CD4-positive, alpha-beta T cell (primary cell): ENCODE measurements at regions of chr14 and their contacts with region 1.

Region 1: DNA sequence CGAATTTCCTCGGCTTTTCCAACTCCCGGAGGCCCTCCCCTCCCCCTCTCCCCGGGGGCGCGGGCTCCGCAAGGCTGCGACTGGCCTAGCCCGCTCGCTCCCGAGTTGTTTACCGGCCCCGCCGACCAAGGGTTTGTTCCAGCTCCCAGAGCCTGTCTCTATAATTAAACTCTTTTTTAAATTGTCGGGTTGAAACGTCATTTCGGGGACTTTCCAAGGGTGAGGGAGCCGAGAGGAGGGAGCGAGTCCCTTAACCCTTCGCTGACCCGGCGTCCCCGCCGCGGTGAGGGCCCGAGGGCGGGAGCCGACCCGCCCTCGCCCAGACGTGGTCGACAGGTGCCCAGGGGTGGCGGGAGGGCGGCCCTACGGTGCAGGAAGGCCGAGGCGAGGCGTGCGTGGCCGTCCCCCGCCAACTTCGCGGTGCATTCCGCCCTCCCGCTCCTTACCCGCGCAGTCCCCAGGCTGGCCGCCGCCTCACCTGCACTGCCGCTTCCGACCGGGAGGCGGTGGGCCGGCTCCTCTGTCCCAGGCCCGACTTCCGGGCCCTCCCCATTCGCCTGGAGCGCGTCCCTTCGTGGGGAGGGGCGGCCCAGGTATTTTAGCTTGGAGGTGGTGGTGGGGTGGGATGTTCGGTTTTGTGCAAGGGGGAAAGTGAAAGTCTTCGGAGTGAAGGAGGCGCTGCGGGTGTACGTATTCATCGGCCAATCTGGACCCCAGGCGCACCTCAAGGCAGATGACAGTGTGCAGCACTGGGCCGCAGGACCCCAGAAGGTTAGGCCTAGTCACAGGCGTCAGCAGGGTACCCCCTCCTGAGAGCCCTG is 2.9 kb upstream of the ZFP36L1 start:
- DNase-seq: peak; percentile 66 to 95 (median 80)
- ATAC-seq: peak; percentile 43
- H3K4me3 ChIP-seq: peak overlapping the region; percentile 98
- H3K4me3 Mint-ChIP-seq: peak overlapping the region; percentile 92
- H3K27ac ChIP-seq: peak overlapping the region; percentile 100
- H3K27ac Mint-ChIP-seq: peak overlapping the region; percentile 99
- H3K4me1 ChIP-seq: peaks cover 29% of the 10 kb centered on the region
- H3K4me1 Mint-ChIP-seq: peaks cover 49% of the 10 kb centered on the region
- H3K27me3 ChIP-seq: no peaks in the 10 kb centered on the region
- H3K27me3 Mint-ChIP-seq: no peaks in the 10 kb centered on the region
- CTCF ChIP-seq: peak; percentile 77

Region 2: DNA sequence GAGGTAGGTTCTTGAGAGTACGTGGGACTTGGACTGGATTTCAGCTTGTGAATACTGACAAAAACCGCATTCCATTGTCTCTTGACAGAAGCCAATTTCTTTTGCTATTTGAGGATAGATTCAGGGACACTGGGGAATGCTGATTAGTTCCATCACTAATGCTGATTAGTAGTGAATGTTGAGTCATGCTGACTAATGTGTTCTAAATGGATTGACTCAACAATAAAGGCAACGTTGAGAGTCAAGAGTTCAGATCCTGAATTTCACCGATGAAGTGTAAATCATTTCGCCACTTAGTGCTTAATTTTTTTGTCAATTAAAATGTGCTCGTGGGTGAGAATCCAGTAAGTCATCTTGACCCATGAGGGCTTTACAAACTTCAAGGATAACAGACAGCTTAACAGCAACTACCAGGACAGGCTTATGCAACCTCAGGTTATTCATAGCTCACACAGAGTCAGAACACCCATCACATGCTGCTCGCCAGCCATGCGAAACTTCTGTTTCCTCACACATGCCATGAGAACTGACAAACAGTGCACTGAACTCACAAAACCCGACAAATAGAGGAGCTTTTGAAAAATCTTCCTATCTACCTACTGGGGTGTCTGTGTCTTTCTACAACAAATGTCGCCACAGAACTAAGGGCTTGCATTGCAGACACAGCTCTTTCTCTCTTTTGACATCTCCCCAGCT is 319.4 kb before region 1 on chr14:
- CTCF ChIA-PET with region 1: no interaction called
- POLR2A ChIA-PET with region 1: no interaction called
- intact Hi-C with region 1: no loop called
- DNase-seq: peak in 2 of 14 experiments; percentile 50 to 61
- ATAC-seq: no peak
- H3K4me3 ChIP-seq: no peak overlapping the region
- H3K4me3 Mint-ChIP-seq: no peak overlapping the region
- H3K27ac ChIP-seq: no peak overlapping the region
- H3K27ac Mint-ChIP-seq: no peak overlapping the region
- H3K4me1 ChIP-seq: peaks cover 6% of the 10 kb centered on the region
- H3K4me1 Mint-ChIP-seq: peaks cover 6% of the 10 kb centered on the region
- H3K27me3 ChIP-seq: no peaks in the 10 kb centered on the region
- H3K27me3 Mint-ChIP-seq: no peaks in the 10 kb centered on the region
- CTCF ChIP-seq: no peak

Region 3: GRCh38 chr14:68757618-68758081 is 38.2 kb before region 1 on chr14:
- CTCF ChIA-PET with region 1: no interaction called
- POLR2A ChIA-PET with region 1: no interaction called
- intact Hi-C with region 1: no loop called
- DNase-seq: peak in 2 of 14 experiments; percentile 56 to 71
- ATAC-seq: peak; percentile 41
- H3K4me3 ChIP-seq: no peak overlapping the region
- H3K4me3 Mint-ChIP-seq: no peak overlapping the region
- H3K27ac ChIP-seq: no peak overlapping the region
- H3K27ac Mint-ChIP-seq: no peak overlapping the region
- H3K4me1 ChIP-seq: peaks cover 20% of the 10 kb centered on the region
- H3K4me1 Mint-ChIP-seq: peaks cover 29% of the 10 kb centered on the region
- H3K27me3 ChIP-seq: no peaks in the 10 kb centered on the region
- H3K27me3 Mint-ChIP-seq: no peaks in the 10 kb centered on the region
- CTCF ChIP-seq: no peak

Region 4: DNA sequence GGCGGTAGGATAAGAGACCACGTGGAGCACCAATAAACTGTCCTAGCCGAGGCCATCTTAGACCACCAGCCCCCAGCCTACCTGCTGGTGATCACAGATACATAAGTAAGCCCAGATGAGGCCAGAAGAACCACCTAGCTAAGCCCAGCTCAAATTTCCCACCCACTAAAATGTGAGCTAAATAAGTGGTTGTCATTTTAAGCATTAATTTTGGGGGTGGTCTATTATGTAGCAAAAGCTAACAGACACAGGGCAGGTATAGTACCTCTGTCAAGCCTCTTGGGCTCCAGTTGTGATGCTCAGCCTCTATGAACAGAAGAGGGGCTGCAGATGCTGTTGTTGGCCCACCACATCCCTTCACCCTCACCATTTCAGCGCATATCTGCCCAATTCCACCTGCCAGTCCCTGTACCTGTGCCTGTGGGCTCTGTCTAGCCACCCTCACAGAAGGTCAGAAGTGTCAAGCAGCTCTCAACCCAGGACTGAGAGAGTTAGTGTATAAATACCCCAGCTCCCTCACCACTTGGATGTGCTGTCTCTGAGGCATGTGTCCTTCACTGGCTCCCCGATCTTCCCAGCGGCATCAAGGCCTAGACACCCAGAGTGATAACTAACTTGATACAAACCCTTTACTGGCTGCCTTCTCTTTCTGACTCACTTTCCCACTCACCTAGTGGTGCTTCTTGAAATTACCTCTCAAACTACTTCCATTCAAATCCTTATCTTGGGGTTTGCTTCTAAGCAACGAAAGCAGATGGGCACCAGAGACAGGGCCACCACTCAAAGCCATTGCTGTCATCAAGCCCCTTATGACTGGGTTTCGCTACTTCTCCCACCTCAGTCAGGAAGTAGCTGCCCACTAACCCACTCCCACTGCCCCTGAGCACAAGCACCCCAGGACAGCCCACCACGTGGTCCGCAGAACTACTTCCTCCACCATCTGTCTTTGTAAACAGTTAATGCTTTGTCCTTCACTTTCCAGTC is 20.4 kb before region 1 on chr14:
- CTCF ChIA-PET with region 1: interaction called, 36 read pairs
- POLR2A ChIA-PET with region 1: interaction called, 230 read pairs
- intact Hi-C with region 1: loop called in 1 of 2 experiments (anchors 2 kb)
- DNase-seq: peak in 1 of 14 experiments; percentile 24
- ATAC-seq: no peak
- H3K4me3 ChIP-seq: no peak overlapping the region
- H3K4me3 Mint-ChIP-seq: no peak overlapping the region
- H3K27ac ChIP-seq: no peak overlapping the region
- H3K27ac Mint-ChIP-seq: peak overlapping the region; percentile 27
- H3K4me1 ChIP-seq: peaks cover 83% of the 10 kb centered on the region
- H3K4me1 Mint-ChIP-seq: peaks cover 87% of the 10 kb centered on the region
- H3K27me3 ChIP-seq: no peaks in the 10 kb centered on the region
- H3K27me3 Mint-ChIP-seq: no peaks in the 10 kb centered on the region
- CTCF ChIP-seq: no peak

Region 5: GRCh38 chr14:68807148-68807600 is 11.4 kb after region 1 on chr14:
- CTCF ChIA-PET with region 1: interaction called, 5 read pairs
- POLR2A ChIA-PET with region 1: interaction called, 816 read pairs
- intact Hi-C with region 1: no loop called
- DNase-seq: peak in 4 of 14 experiments; percentile 16 to 57 (median 38)
- ATAC-seq: peak; percentile 49
- H3K4me3 ChIP-seq: no peak overlapping the region
- H3K4me3 Mint-ChIP-seq: no peak overlapping the region
- H3K27ac ChIP-seq: peak overlapping the region in 1 of 2 donors; percentile 37
- H3K27ac Mint-ChIP-seq: peak overlapping the region; percentile 42
- H3K4me1 ChIP-seq: peaks cover 27% of the 10 kb centered on the region
- H3K4me1 Mint-ChIP-seq: peaks cover 49% of the 10 kb centered on the region
- H3K27me3 ChIP-seq: no peaks in the 10 kb centered on the region
- H3K27me3 Mint-ChIP-seq: no peaks in the 10 kb centered on the region
- CTCF ChIP-seq: no peak

Region 6: DNA sequence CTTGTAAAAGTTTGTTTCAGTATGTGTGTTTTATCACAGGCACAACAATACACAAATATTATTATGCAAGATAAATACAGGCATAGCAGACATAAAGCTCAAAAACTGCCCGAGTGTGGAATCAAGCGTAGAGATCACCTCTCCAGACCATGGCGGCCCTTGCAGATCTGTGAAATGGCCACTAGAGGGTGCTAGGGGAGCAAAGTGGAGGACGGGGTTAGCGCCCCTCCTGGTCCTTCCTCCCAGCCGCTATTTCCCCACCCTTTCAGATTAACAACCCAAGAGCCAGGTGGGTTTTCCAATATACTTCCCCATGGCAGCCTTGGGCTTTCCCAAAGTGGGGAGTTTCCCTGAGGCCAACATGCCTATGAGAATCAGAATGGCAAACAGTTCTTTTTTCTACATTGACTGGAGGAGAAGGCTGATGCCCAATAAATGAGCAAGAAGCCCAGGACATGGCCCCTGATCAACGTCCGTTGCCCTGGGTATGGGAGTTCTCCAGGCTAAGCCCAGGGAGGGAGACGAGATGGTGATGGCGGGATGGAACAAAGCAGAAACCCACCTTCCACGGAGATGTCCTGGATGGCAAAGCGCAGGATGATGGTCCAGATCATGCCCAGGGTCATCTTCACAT is 115.9 kb after region 1 on chr14:
- CTCF ChIA-PET with region 1: no interaction called
- POLR2A ChIA-PET with region 1: no interaction called
- intact Hi-C with region 1: no loop called
- DNase-seq: peak; percentile 69 to 90 (median 78)
- ATAC-seq: peak; percentile 99
- H3K4me3 ChIP-seq: no peak overlapping the region
- H3K4me3 Mint-ChIP-seq: no peak overlapping the region
- H3K27ac ChIP-seq: no peak overlapping the region
- H3K27ac Mint-ChIP-seq: peak overlapping the region; percentile 45
- H3K4me1 ChIP-seq: peaks cover 9% of the 10 kb centered on the region
- H3K4me1 Mint-ChIP-seq: peaks cover 23% of the 10 kb centered on the region
- H3K27me3 ChIP-seq: no peaks in the 10 kb centered on the region
- H3K27me3 Mint-ChIP-seq: no peaks in the 10 kb centered on the region
- CTCF ChIP-seq: peak; percentile 99